Activated naive CD4-positive, alpha-beta T cell treated with anti-CD3 and anti-CD28 coated beads for 36 hours (primary cell): ENCODE measurements at regions of chr5 and their contacts with region 1.

Region 1: DNA sequence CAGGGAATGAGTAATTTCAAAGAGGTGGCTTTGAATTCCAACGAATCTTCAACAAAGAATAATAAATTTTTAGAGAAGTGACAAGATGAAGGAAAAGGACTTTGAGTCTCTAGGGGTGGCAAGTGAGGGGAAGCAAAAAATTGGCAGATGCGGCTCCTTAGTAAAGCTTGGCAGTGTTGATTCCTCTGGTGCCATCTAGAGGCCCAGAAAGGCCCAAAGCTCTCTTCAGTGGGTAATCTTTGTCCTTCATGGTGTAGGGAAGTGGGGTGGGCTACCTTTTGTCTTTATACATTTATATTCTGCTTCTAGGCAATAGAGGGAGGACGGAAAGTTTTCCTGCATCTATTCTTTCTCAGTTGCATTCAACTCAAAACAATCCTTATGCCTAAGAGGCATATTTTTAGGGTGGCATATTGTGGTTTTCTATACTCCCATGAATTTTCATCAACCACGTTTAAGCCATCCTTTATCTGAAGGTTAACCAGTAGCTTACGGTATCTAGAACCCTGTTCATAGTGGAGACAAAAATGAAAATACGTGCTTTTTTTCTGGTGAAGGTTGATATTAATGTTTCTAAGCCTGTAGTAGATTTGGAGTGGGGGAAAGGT is 17.5 kb upstream of the ROPN1L start:
- DNase-seq: peak; percentile 43
- H3K4me3 Mint-ChIP-seq: no peak overlapping the region
- H3K27ac Mint-ChIP-seq: no peak overlapping the region
- H3K4me1 Mint-ChIP-seq: peaks cover 35% of the 10 kb centered on the region
- H3K27me3 Mint-ChIP-seq: no peaks in the 10 kb centered on the region

Region 2: DNA sequence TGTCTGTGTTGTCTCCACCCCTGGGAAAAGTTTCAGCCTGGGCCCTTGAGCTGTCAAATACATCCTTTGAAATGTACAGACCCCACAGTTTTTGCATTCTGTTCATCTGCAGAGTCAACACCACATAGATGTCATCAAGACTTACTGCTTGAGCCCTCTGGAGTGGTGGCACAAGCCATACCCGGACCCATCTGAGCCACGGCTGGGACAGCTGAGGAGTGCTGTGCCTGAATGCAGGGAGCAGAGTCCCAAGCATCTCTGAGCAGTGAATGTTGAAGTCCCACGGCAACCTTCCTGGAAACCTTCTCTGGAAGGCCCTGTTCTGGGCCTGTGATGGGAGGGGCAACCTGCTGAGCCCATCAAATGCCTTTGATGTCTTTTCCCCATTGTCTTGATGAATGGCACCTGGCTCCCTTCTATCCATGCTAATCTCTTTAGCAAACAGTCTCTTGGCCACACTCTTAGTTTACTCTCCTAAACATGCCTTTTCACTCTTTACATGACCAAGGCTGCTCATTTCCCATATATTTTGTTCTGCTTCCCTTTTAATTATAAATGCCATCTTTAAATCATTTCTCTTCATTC is 267.1 kb before region 1 on chr5:
- CTCF ChIA-PET with region 1: no interaction called
- intact Hi-C with region 1: no loop called
- DNase-seq: no peak
- H3K4me3 Mint-ChIP-seq: no peak overlapping the region
- H3K27ac Mint-ChIP-seq: no peak overlapping the region
- H3K4me1 Mint-ChIP-seq: no peaks in the 10 kb centered on the region
- H3K27me3 Mint-ChIP-seq: peaks cover 4% of the 10 kb centered on the region

Region 3: GRCh38 chr5:10277773-10278630 is 146.2 kb before region 1 on chr5:
- CTCF ChIA-PET with region 1: interaction called, 29 read pairs
- intact Hi-C with region 1: no loop called
- DNase-seq: no peak
- H3K4me3 Mint-ChIP-seq: no peak overlapping the region
- H3K27ac Mint-ChIP-seq: no peak overlapping the region
- H3K4me1 Mint-ChIP-seq: peaks cover 18% of the 10 kb centered on the region
- H3K27me3 Mint-ChIP-seq: no peaks in the 10 kb centered on the region

Region 4: DNA sequence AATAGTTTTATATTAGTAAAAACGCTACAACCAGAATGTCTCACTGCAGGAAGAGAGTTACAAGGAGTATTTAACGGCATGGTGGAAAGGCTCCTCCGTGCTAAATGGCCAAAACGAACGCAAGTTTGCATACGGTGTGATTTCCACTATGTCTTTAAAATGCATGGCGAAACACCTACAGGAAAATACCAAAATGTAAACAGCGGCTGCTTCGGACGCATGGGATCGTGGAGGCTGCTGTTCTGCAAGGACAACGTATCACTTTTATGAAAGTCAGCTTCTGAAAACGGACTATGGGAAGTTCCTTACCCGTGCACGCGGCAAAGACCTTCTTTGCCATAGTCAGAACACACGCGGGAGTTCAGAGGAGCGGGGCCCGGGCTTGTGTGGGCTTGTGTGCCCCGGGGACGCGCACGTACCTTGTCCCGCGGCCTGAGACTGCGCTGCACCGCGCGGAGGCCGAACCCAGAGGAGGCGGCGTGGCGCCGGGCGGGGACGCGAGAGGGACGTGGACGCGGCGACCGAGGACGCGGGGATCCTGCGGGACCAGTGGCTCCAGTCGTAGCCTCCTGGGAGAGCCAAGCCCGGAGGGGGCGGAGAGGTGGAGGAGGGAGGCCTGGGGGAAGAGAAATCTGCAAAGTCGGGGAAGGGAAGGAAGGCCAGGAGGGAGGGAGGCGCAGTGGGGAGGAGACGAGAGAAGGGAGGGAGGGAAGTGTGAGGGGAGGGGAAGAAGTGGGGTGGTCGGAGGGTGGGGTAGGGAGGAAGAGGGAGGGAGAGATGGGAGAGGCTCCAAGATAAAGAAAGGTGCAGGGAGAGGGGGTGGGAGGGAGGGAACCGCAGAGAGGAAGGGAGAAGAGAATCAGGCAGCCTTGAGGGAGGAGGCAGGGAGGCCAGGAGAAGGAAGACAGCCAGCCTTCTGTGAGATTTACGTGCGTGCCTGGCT is 116.8 kb before region 1 on chr5 and contains the start of gene CMBL:
- CTCF ChIA-PET with region 1: no interaction called
- intact Hi-C with region 1: no loop called
- DNase-seq: peak; percentile 37
- H3K4me3 Mint-ChIP-seq: peak within 1 kb of the TSS; percentile 77
- H3K27ac Mint-ChIP-seq: no peak within 1 kb of the TSS
- H3K4me1 Mint-ChIP-seq: peaks cover 8% of the 10 kb centered on the region
- H3K27me3 Mint-ChIP-seq: peaks cover 20% of the 10 kb centered on the region
- total RNA-seq, gene CMBL: 2.2 to 3.2 TPM

Region 5: DNA sequence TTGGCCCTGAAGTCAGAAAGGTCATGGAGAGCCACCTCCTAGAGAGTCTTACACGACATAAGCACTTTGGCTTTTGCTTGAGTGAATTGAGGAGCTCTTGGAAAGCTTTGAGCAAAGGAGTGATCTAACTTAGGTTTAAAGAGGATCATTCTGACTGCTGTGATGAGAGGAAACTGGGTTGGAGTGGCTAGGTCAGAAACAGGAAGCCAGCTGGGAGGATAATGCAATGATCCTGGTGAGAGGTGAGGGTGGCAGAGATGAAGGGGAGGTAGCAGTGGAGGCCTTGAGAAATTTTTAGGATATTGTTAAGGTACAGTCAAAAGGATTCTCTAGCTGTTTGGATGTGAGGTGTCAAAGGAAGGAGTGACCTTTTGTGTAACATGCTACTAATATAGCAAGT is 14.7 kb before region 1 on chr5:
- CTCF ChIA-PET with region 1: interaction called, 10 read pairs
- intact Hi-C with region 1: no loop called
- DNase-seq: no peak
- H3K4me3 Mint-ChIP-seq: no peak overlapping the region
- H3K27ac Mint-ChIP-seq: no peak overlapping the region
- H3K4me1 Mint-ChIP-seq: no peaks in the 10 kb centered on the region
- H3K27me3 Mint-ChIP-seq: no peaks in the 10 kb centered on the region

Region 6: DNA sequence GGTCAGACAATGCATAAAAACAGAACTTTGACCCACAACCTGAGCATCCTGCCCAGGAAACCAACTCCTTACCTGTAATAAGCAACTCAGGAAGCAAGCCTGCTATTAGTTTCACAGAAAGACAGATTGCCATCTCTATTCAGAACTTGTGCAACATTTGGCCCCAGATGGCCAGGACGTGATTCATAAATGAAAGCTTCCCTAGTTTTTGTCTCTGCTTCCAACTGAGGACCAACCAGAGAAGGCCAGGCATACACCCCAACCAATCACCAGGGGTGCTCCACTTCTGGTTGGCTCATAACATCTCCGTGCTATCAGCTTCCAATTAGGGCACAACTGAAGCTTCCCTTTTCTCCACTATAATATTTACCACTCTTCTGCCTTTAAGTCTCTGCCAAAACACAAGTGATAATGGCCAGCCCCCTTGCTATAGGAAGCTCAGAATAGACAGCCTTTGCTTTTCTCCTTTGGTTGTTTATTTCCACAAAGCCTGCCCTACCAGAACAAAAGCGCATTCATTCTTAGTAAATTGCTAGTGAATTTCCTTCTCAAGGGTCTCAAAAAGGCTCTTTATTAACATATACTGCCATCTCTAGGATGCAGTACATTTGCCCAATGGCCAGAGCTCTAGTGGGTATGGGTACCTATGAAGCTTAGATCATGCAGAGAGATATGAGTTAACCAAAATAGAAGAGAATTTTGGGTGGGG is 626.5 kb after region 1 on chr5:
- CTCF ChIA-PET with region 1: no interaction called
- intact Hi-C with region 1: no loop called
- DNase-seq: no peak
- H3K4me3 Mint-ChIP-seq: no peak overlapping the region
- H3K27ac Mint-ChIP-seq: no peak overlapping the region
- H3K4me1 Mint-ChIP-seq: no peaks in the 10 kb centered on the region
- H3K27me3 Mint-ChIP-seq: peaks cover 3% of the 10 kb centered on the region